ENCODE measurements at regions of chr1 and their contacts with region 1.

Region 1: DNA sequence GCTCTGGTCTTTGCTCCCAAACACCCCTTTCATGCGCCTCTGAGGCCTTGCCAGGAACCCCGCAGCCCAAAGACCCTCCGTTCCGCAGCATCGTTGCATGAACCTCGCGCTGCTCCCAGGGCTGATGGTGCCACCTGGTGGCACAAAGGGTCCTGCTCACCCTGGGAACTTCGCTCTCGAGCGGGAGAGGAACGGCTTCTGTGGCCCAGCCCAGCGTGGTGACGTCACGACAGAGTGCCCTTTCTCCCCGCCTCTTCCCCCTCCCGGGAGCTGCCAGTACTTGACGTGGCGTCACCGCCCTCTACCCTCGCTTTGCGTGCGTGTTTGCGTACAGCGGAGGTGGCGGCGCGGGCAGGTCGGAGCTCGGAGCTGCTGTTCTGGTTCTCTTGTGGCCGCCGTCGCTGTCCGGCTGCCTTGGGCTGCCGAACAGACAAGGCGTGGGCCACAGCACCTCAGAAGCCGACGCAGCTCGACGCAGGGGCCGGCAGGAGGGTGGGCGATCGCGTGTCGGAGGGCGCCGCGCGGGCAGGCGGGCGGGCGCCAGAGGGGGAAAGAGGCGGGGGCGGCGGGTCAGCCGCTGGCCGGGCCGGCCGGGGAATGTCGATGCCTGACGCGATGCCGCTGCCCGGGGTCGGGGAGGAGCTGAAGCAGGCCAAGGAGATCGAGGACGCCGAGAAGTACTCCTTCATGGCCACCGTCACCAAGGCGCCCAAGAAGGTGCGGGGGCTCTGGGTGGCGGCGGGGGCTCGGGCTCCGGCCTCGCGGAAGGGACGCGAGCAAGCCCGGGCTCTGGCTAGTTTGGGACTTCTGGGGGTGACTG is at the start of gene AHCYL1:
- DNase-seq: peak; percentile 100
- total RNA-seq, gene AHCYL1: 53.6 TPM

Region 2: GRCh38 chr1:109548321-109549267 is 436.1 kb before region 1 on chr1 and contains the start of gene GNAI3:
- intact Hi-C with region 1: loop called (anchors 5 kb)
- DNase-seq: peak; percentile 99
- total RNA-seq, gene GNAI3: 3.9 TPM

Region 3: DNA sequence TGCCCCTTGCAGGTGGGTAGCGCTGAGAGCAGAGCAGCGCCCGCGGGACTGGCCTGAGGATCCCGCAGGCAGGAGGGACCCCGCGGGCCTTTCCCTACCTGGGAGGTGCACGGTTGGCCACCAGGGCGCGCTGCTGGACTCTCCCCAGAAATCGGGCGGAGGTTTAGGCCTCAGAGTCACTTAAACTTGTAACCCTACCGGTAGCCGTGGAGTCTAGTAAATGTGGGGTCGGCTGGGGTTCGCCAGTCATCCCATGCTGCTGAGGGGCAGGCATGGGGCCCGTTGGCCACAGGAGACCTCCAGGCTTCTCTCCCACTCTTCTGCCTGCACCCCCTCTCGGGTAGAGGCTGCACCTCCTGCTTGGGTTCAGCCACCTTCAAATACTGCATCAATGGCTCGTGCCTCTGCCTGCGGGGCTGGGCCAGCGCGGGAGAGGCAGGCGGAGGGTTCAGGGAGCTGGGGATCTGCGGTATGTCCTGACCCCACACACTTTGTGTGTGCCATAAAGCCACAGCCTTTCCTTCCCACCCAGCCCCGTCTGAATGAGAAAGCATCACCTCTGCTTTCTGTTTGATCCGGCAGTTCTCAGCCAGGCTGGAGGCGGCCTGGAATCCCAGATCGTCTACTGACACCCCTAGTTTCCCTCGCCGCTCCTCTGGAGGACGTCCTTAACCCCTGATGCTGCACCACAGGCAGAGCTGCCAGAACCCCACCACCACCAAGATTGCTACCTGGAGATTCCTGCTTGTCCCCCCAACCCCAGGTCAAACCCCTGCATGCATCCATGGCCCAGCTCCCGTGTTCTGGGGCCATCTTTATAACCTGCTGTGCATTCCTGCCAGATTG is 341.1 kb before region 1 on chr1:
- intact Hi-C with region 1: loop called (anchors 5 kb)
- DNase-seq: peak; percentile 93

Region 4: GRCh38 chr1:109773146-109773899 is 211.3 kb before region 1 on chr1:
- intact Hi-C with region 1: loop called (anchors 1 kb)
- DNase-seq: peak; percentile 91

Region 5: GRCh38 chr1:109790735-109791494 is 193.8 kb before region 1 on chr1:
- intact Hi-C with region 1: loop called (anchors 5 kb)
- DNase-seq: peak; percentile 86

Region 6: GRCh38 chr1:109910123-109910962 is 74.3 kb before region 1 on chr1 and contains the start of gene CSF1:
- intact Hi-C with region 1: loop called (anchors 5 kb)
- DNase-seq: peak; percentile 89
- total RNA-seq, gene CSF1: 16.7 TPM

Region 7: GRCh38 chr1:109927911-109928321 is 56.8 kb before region 1 on chr1:
- intact Hi-C with region 1: loop called (anchors 5 kb)
- DNase-seq: peak; percentile 82